ENCODE measurements at regions of chr1 and their contacts with region 1.

Region 1: GRCh38 chr1:228664399-228664914 is 70.8 kb upstream of the RHOU start:
- DNase-seq: peak; percentile 13
- H3K4me3 ChIP-seq: no peak overlapping the region
- H3K27ac ChIP-seq: no peak overlapping the region
- H3K27me3 ChIP-seq: peaks cover 5% of the 10 kb centered on the region
- CTCF ChIP-seq: peak; percentile 79

Region 2: GRCh38 chr1:228650147-228650546 is 14.3 kb before region 1 on chr1:
- CTCF ChIA-PET with region 1: interaction called, 12 read pairs
- POLR2A ChIA-PET with region 1: no interaction called
- DNase-seq: no peak
- H3K4me3 ChIP-seq: no peak overlapping the region
- H3K27ac ChIP-seq: no peak overlapping the region
- H3K27me3 ChIP-seq: peaks cover 38% of the 10 kb centered on the region
- CTCF ChIP-seq: no peak